Ascending aorta (tissue), 2 donors: ENCODE measurements at regions of chr2 and their contacts with region 1.

Region 1: GRCh38 chr2:30346471-30347169 is 100.4 kb upstream of the LCLAT1 start:
- DNase-seq: peak; percentile 19 to 87
- H3K4me3 ChIP-seq: peak overlapping the region; percentile 26 to 32
- H3K27ac ChIP-seq: peak overlapping the region; percentile 58 to 85
- H3K4me1 ChIP-seq: peaks cover 0 to 21% of the 10 kb centered on the region in 2 donors
- H3K27me3 ChIP-seq: no peaks in the 10 kb centered on the region
- CTCF ChIP-seq: no peak

Region 2: GRCh38 chr2:30239986-30240752 is 106.5 kb before region 1 on chr2:
- intact Hi-C with region 1: no loop called
- DNase-seq: no peak
- H3K4me3 ChIP-seq: peak overlapping the region; percentile 1 to 3
- H3K27ac ChIP-seq: peak overlapping the region; percentile 63 to 82
- H3K4me1 ChIP-seq: peaks cover 9 to 64% of the 10 kb centered on the region in 2 donors
- H3K27me3 ChIP-seq: no peaks in the 10 kb centered on the region
- CTCF ChIP-seq: no peak

Region 3: DNA sequence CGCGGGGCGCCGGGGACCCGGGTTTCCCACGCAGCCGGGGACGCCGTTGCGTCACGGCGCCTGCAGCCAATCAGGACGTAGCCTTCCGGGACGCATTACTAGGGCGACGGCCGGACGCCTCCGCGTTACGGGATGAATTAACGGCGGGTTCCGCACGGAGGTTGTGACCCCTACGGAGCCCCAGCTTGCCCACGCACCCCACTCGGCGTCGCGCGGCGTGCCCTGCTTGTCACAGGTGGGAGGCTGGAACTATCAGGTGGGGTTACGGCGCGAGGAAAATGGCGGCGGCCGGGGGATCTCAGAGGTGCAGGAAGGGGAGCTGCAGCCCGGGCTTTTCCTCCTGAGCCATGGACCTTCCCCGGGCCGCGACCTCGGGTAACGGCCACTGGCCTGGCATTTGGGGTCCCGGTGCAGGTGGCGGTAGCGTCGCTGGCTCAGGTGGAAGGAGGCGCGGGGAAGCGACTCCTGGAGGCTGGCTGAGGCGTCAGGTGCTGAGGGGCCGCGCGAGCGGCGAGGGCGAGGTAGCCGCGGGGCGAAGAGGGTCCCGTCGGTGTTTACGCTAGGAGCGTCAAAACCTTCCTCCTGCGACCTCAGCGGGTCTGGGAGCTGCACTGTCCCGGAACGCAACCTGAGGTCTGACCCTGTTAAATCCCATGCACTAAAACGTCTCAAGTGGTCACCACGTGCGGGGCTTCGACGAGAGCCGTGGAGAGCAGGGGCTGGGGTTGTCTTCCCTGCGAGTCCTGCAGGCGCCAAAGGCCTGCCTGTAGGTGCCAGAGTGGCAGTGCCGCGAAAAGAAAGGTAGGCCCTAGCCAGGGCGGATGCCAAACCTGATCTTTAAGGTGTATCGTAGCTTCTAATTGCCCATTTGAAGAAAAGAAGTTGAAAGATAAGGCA is 100.8 kb after region 1 on chr2 and contains the start of gene LCLAT1:
- intact Hi-C with region 1: loop called (anchors 5 kb)
- DNase-seq: peak; percentile 22 to 88
- H3K4me3 ChIP-seq: peak within 1 kb of the TSS; percentile 82 to 87
- H3K27ac ChIP-seq: peak within 1 kb of the TSS; percentile 66 to 70
- H3K4me1 ChIP-seq: peaks cover 4 to 5% of the 10 kb centered on the region in 2 donors
- H3K27me3 ChIP-seq: no peaks in the 10 kb centered on the region
- CTCF ChIP-seq: peak in 1 of 3 experiments; percentile 13
- total RNA-seq, gene LCLAT1: 9.8 TPM